B cell (primary cell): ENCODE measurements at regions of chr1 and their contacts with region 1.

Region 1: DNA sequence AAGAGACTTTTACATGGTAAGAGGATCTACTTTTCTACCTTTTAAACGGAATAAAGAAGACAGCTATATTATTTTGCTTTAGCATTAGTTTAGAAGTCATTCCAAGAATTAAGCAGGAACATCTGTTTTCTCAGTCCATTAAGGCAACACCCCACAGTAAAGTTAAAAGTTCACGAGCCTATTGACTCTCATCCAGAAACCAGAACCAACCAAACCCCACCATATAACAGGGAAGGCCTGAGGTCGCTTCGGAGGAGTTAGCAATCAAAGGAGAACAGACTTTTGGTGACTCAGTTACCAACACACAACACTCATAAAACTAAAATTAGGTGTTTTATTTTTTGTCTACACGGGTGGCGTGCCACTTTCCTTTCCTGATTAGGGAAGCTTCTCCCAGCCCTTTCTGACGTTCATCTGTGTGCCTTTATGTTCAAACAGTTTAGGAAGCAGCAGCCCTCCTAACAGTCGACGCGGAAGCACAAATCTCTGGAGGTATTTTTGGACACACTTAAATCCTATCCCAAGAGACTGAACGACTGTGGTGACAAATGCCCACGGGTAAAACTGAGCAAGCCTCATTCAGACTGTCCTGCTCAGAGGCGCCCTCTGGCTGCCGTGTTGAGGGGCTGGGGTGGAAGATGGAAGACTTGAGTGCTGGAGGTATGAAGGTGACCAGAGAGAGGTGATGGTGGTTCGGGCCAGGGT is 8.6 kb upstream of the PLA2G2C start:
- DNase-seq: peak; percentile 76
- ATAC-seq: peak; percentile 91
- H3K4me3 ChIP-seq: no peak overlapping the region
- H3K4me3 Mint-ChIP-seq: peak overlapping the region; percentile 17
- H3K27ac ChIP-seq: no peak overlapping the region
- H3K27ac Mint-ChIP-seq: no peak overlapping the region
- H3K4me1 ChIP-seq: peaks cover 4 to 5% of the 10 kb centered on the region in 2 donors
- H3K4me1 Mint-ChIP-seq: peaks cover 6% of the 10 kb centered on the region
- H3K27me3 ChIP-seq: peaks cover 0 to 30% (median 8%) of the 10 kb centered on the region in 4 experiments
- H3K27me3 Mint-ChIP-seq: peaks cover 34% of the 10 kb centered on the region
- CTCF ChIP-seq: peak; percentile 93

Region 2: DNA sequence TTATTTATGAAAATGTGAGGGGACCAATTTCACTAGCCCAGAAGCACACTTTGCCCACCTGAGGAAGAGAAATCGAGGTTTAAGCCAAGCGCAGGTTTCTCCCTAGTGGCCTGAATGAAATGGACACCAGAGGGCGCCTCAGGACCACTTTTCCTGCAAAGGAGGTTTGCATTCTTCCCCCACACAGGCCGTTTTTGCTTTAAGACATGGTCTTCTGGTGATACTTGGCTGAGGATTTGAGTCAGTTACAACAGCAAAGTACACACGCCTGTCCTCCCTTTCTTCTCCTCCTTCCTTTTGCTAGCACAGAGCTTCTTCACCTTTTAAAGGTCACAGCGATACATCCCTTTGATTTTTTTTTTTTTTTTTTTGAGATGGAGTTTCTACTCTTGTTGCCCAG is 276.9 kb before region 1 on chr1:
- CTCF ChIA-PET with region 1: interaction called, 81 read pairs
- POLR2A ChIA-PET with region 1: no interaction called
- intact Hi-C with region 1: no loop called
- DNase-seq: peak; percentile 85
- ATAC-seq: peak; percentile 49
- H3K4me3 ChIP-seq: no peak overlapping the region
- H3K4me3 Mint-ChIP-seq: no peak overlapping the region
- H3K27ac ChIP-seq: no peak overlapping the region
- H3K27ac Mint-ChIP-seq: no peak overlapping the region
- H3K4me1 ChIP-seq: no peaks in the 10 kb centered on the region
- H3K4me1 Mint-ChIP-seq: peaks cover 4% of the 10 kb centered on the region
- H3K27me3 ChIP-seq: peaks cover 0 to 5% (median 0%) of the 10 kb centered on the region in 4 experiments
- H3K27me3 Mint-ChIP-seq: peaks cover 4% of the 10 kb centered on the region
- CTCF ChIP-seq: peak; percentile 86

Region 3: GRCh38 chr1:20100632-20101355 is 94.1 kb before region 1 on chr1:
- CTCF ChIA-PET with region 1: interaction called, 52 read pairs
- POLR2A ChIA-PET with region 1: no interaction called
- intact Hi-C with region 1: no loop called
- DNase-seq: peak; percentile 74
- ATAC-seq: peak; percentile 94
- H3K4me3 ChIP-seq: no peak overlapping the region
- H3K4me3 Mint-ChIP-seq: no peak overlapping the region
- H3K27ac ChIP-seq: no peak overlapping the region
- H3K27ac Mint-ChIP-seq: no peak overlapping the region
- H3K4me1 ChIP-seq: peaks cover 5 to 8% of the 10 kb centered on the region in 2 donors
- H3K4me1 Mint-ChIP-seq: peaks cover 3% of the 10 kb centered on the region
- H3K27me3 ChIP-seq: no peaks in the 10 kb centered on the region
- H3K27me3 Mint-ChIP-seq: peaks cover 3% of the 10 kb centered on the region
- CTCF ChIP-seq: peak; percentile 80

Region 4: GRCh38 chr1:20169932-20170331 is 25.0 kb before region 1 on chr1:
- CTCF ChIA-PET with region 1: interaction called, 8 read pairs
- POLR2A ChIA-PET with region 1: no interaction called
- intact Hi-C with region 1: loop called (anchors 2 kb)
- DNase-seq: no peak
- ATAC-seq: no peak
- H3K4me3 ChIP-seq: no peak overlapping the region
- H3K4me3 Mint-ChIP-seq: no peak overlapping the region
- H3K27ac ChIP-seq: no peak overlapping the region
- H3K27ac Mint-ChIP-seq: no peak overlapping the region
- H3K4me1 ChIP-seq: peaks cover 14 to 20% of the 10 kb centered on the region in 2 donors
- H3K4me1 Mint-ChIP-seq: peaks cover 19% of the 10 kb centered on the region
- H3K27me3 ChIP-seq: peaks cover 0 to 7% (median 0%) of the 10 kb centered on the region in 4 experiments
- H3K27me3 Mint-ChIP-seq: peaks cover 20% of the 10 kb centered on the region
- CTCF ChIP-seq: no peak

Region 5: GRCh38 chr1:20212685-20213331 is 17.9 kb after region 1 on chr1:
- CTCF ChIA-PET with region 1: interaction called, 22 read pairs
- POLR2A ChIA-PET with region 1: no interaction called
- intact Hi-C with region 1: no loop called
- DNase-seq: peak; percentile 77
- ATAC-seq: peak; percentile 90
- H3K4me3 ChIP-seq: peak overlapping the region in 4 of 5 experiments; percentile 6 to 44 (median 28)
- H3K4me3 Mint-ChIP-seq: peak overlapping the region; percentile 74
- H3K27ac ChIP-seq: no peak overlapping the region
- H3K27ac Mint-ChIP-seq: peak overlapping the region; percentile 53
- H3K4me1 ChIP-seq: peaks cover 10 to 16% of the 10 kb centered on the region in 2 donors
- H3K4me1 Mint-ChIP-seq: peaks cover 15% of the 10 kb centered on the region
- H3K27me3 ChIP-seq: peaks cover 0 to 38% (median 2%) of the 10 kb centered on the region in 4 experiments
- H3K27me3 Mint-ChIP-seq: peaks cover 14% of the 10 kb centered on the region
- CTCF ChIP-seq: peak; percentile 94